ENCODE measurements at regions of chr4 and their contacts with region 1.

Region 1: DNA sequence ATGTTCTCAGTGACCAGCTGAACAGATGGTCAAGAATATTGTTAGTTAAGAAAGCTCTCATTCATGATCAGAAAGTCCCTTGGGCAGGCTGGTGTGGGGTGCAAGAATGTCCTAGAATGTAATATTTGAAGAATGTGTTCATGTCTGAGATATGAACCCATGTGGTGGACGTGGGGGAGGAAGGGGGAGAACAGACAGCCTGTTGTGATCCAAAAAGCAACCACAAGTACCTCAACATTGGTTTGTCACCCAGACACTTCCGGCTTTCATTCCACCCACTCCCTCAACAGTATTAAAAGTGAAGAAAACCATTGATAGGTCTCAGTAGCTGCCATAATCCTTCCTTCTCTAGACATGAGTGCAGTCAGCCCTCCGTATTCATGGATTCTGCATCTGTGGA is 82.2 kb downstream of the MAML3 start:
- DNase-seq: peak in 8 of 9 donors; percentile 62 to 84 (median 78)
- ATAC-seq: peak; percentile 91
- H3K4me3 ChIP-seq: peak overlapping the region; percentile 33
- H3K4me3 Mint-ChIP-seq: peak overlapping the region; percentile 69 to 91 (median 82)
- H3K27ac ChIP-seq: peak overlapping the region; percentile 54
- H3K27ac Mint-ChIP-seq: peak overlapping the region; percentile 84 to 98 (median 91)
- H3K4me1 ChIP-seq: peaks cover 18 to 30% of the 10 kb centered on the region in 2 donors
- H3K4me1 Mint-ChIP-seq: peaks cover 41 to 61% (median 56%) of the 10 kb centered on the region in 7 donors
- H3K27me3 ChIP-seq: no peaks in the 10 kb centered on the region
- H3K27me3 Mint-ChIP-seq: peaks cover 0 to 59% (median 0%) of the 10 kb centered on the region in 5 donors

Region 2: DNA sequence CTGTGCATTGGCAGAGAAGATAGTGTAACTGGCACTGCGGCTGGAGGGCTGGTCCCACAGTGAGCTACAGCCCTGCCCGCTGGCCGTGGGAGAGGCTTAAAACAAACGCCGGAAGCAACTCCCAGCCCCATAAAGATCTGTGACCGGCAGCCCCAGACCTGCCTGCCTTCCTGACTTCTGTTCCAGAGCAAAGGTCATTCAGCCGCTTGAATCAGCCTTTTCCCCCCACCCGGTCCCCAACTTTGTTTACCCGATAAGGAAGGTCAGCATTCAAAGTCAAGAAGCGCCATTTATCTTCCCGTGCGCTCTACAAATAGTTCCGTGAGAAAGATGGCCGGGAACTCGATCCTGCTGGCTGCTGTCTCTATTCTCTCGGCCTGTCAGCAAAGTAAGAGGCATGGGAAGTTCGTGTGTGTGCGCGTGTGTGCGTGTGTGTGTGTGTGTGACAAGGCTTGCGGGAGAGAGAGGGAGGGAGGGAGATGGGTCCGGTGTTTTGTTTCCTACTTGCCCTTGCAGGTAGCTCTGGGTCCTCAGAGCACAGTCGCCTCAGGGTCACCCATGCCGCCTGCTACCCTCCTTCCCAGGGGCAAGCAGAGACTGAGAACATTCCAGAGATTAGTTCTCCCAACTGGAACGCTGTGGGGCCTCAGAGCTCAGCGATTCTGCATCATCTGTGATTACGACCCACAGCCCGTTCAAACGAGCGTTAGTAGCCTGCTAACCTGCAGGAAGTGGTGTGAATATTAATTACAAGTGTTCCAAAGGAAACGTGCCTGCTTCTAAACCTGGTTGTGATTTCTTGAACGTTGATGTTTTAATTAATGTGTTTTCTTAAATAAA is 405.9 kb before region 1 on chr4 and contains the start of gene MGST2:
- CTCF ChIA-PET with region 1: no interaction called
- POLR2A ChIA-PET with region 1: no interaction called
- intact Hi-C with region 1: no loop called
- DNase-seq: peak in 5 of 9 donors; percentile 17 to 51 (median 27)
- ATAC-seq: peak; percentile 61
- H3K4me3 ChIP-seq: peak within 1 kb of the TSS; percentile 64
- H3K4me3 Mint-ChIP-seq: peak within 1 kb of the TSS; percentile 90 to 99 (median 94)
- H3K27ac ChIP-seq: peak within 1 kb of the TSS; percentile 42
- H3K27ac Mint-ChIP-seq: peak within 1 kb of the TSS; percentile 49 to 95 (median 88)
- H3K4me1 ChIP-seq: peaks cover 0 to 9% of the 10 kb centered on the region in 2 donors
- H3K4me1 Mint-ChIP-seq: peaks cover 15 to 44% (median 19%) of the 10 kb centered on the region in 7 donors
- H3K27me3 ChIP-seq: no peaks in the 10 kb centered on the region
- H3K27me3 Mint-ChIP-seq: no peaks in the 10 kb centered on the region
- total RNA-seq, gene MGST2: 1.4 to 37.3 (median 1.9) TPM

Region 3: DNA sequence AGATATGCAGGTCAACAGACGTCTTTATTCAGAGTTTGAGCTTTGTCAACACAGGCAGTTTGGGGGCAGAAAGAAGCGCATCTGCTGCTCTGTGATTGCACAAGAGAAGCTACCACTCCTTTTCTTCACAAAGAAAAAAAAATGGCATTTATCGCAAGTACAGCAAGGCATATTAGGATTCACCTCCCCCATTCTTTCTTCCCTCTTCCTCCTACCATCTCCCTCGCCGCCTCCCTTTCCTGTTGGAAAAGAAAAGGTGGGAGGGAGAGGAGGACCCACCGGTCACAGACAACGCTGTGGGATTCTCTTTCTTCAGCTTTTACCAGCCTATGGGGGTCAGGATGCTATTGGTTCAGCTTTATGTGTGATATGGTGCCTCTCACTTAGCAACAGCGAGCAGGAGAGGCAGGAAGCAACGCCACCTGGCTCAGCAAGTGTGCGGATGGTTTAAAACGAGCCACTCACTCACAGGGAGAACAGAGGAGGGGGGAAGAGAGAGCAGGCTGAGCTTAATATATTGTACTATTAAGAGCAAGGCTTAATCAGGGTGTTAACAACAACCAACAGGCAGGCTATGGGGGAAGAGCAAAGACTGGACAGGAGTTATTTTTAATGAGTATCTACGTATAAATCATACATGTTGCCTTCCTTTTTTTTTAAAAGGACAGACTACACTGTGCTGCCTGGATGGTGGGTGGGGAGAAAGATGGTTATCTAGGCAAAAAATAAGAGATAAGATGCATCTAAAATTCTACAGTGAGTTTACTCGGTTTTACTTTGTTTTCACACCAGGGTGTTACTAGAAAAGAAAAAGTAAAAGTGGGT is 22.6 kb before region 1 on chr4:
- CTCF ChIA-PET with region 1: interaction called, 5 read pairs
- POLR2A ChIA-PET with region 1: interaction called, 8 read pairs
- intact Hi-C with region 1: loop called (anchors 1 to 2 kb)
- DNase-seq: peak in 8 of 9 donors; percentile 13 to 73 (median 61)
- ATAC-seq: peak; percentile 92
- H3K4me3 ChIP-seq: peak overlapping the region; percentile 45
- H3K4me3 Mint-ChIP-seq: peak overlapping the region; percentile 76 to 93 (median 86)
- H3K27ac ChIP-seq: peak overlapping the region; percentile 46
- H3K27ac Mint-ChIP-seq: peak overlapping the region; percentile 77 to 94 (median 82)
- H3K4me1 ChIP-seq: peaks cover 3 to 14% of the 10 kb centered on the region in 2 donors
- H3K4me1 Mint-ChIP-seq: peaks cover 7 to 60% (median 41%) of the 10 kb centered on the region in 7 donors
- H3K27me3 ChIP-seq: no peaks in the 10 kb centered on the region
- H3K27me3 Mint-ChIP-seq: peaks cover 0 to 64% (median 0%) of the 10 kb centered on the region in 5 donors

Region 4: DNA sequence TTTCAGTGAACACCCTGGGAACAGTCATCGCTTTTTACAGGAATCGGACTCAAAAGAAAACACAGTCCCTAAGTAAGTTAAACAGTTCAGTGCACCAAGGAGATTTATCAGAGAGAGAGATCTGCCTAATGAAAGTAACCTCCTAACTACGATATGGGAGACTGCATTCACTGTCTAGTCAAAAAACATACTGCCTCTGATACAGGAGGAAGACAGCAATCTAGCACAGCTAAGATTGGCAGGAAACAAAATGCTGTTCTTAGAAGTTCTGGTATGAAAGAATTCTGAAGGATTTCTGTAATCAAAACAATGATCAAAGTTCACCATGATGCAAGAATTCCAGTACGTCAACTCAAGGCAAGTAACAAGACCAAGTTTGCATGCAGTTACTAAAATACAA is 10.6 kb before region 1 on chr4:
- CTCF ChIA-PET with region 1: interaction called, 3 read pairs
- POLR2A ChIA-PET with region 1: interaction called, 11 read pairs
- intact Hi-C with region 1: loop called in 1 of 2 experiments (anchors 1 kb)
- DNase-seq: peak in 6 of 9 donors; percentile 25 to 59 (median 46)
- ATAC-seq: peak; percentile 75
- H3K4me3 ChIP-seq: no peak overlapping the region
- H3K4me3 Mint-ChIP-seq: peak overlapping the region in 8 of 10 donors; percentile 66 to 91 (median 72)
- H3K27ac ChIP-seq: peak overlapping the region; percentile 23
- H3K27ac Mint-ChIP-seq: peak overlapping the region in 8 of 9 donors; percentile 74 to 97 (median 84)
- H3K4me1 ChIP-seq: peaks cover 0 to 4% of the 10 kb centered on the region in 2 donors
- H3K4me1 Mint-ChIP-seq: peaks cover 5 to 32% (median 29%) of the 10 kb centered on the region in 7 donors
- H3K27me3 ChIP-seq: no peaks in the 10 kb centered on the region
- H3K27me3 Mint-ChIP-seq: peaks cover 0 to 74% (median 0%) of the 10 kb centered on the region in 5 donors

Region 5: DNA sequence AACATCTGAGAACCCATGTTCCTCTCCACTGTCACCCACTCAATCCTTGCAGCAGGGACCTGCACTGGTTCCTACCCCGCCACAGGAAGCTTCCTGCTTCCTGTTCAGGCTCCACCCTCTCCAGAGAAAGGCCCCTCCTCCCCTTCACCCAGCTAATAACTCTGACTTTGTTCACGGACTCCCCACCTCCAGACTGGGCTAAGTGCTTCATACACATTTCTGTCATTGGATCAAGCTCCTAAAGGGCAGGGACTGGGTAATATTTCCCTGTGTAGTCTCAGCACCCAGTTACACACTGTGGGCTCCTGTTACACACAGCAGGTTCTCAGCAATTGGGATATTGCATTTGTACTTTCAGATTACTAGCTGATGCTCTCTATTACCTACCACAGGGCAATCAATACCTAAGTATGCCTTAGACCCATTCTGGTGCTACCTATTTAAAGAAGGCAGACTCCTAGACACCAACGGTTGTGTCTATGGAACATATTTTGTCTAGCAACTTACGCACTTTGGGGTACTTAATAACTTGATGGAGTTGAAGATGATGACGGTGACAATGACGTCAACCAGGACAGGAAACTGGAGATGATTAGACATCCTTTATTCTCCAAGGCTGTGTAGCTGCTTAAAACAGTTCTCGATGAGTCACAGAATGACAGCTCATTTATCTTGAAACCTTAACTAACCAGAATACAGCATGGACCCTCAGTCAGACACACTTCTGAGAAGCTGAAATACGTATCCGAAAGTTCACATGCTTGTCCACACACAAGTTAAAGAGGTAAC is 24.1 kb after region 1 on chr4:
- CTCF ChIA-PET with region 1: interaction called, 8 read pairs
- POLR2A ChIA-PET with region 1: interaction called, 15 read pairs
- intact Hi-C with region 1: loop called (anchors 1 kb)
- DNase-seq: peak in 8 of 9 donors; percentile 46 to 92 (median 71)
- ATAC-seq: peak; percentile 73
- H3K4me3 ChIP-seq: peak overlapping the region; percentile 39
- H3K4me3 Mint-ChIP-seq: peak overlapping the region; percentile 68 to 97 (median 88)
- H3K27ac ChIP-seq: peak overlapping the region; percentile 73
- H3K27ac Mint-ChIP-seq: peak overlapping the region; percentile 90 to 99 (median 95)
- H3K4me1 ChIP-seq: peaks cover 5 to 53% of the 10 kb centered on the region in 2 donors
- H3K4me1 Mint-ChIP-seq: peaks cover 51 to 83% (median 75%) of the 10 kb centered on the region in 7 donors
- H3K27me3 ChIP-seq: no peaks in the 10 kb centered on the region
- H3K27me3 Mint-ChIP-seq: peaks cover 0 to 2% (median 0%) of the 10 kb centered on the region in 5 donors

Region 6: GRCh38 chr4:140103676-140104075 is 31.9 kb after region 1 on chr4:
- CTCF ChIA-PET with region 1: interaction called, 4 read pairs
- POLR2A ChIA-PET with region 1: no interaction called
- intact Hi-C with region 1: loop called in 1 of 2 experiments (anchors 1 kb)
- DNase-seq: peak in 1 of 9 donors; percentile 41
- ATAC-seq: peak; percentile 83
- H3K4me3 ChIP-seq: no peak overlapping the region
- H3K4me3 Mint-ChIP-seq: peak overlapping the region in 1 of 10 donors; percentile 59
- H3K27ac ChIP-seq: no peak overlapping the region
- H3K27ac Mint-ChIP-seq: peak overlapping the region in 2 of 9 donors; percentile 61 to 72
- H3K4me1 ChIP-seq: peaks cover 0 to 12% of the 10 kb centered on the region in 2 donors
- H3K4me1 Mint-ChIP-seq: peaks cover 19 to 59% (median 31%) of the 10 kb centered on the region in 7 donors
- H3K27me3 ChIP-seq: no peaks in the 10 kb centered on the region
- H3K27me3 Mint-ChIP-seq: peaks cover 0 to 18% (median 0%) of the 10 kb centered on the region in 5 donors

Region 7: GRCh38 chr4:140116442-140117104 is 44.8 kb after region 1 on chr4:
- CTCF ChIA-PET with region 1: interaction called, 3 read pairs
- POLR2A ChIA-PET with region 1: interaction called, 5 read pairs
- intact Hi-C with region 1: loop called in 1 of 2 experiments (anchors 5 kb)
- DNase-seq: no peak
- ATAC-seq: peak; percentile 79
- H3K4me3 ChIP-seq: no peak overlapping the region
- H3K4me3 Mint-ChIP-seq: peak overlapping the region in 6 of 10 donors; percentile 3 to 37 (median 18)
- H3K27ac ChIP-seq: no peak overlapping the region
- H3K27ac Mint-ChIP-seq: peak overlapping the region in 6 of 9 donors; percentile 6 to 60 (median 24)
- H3K4me1 ChIP-seq: peaks cover 0 to 7% of the 10 kb centered on the region in 2 donors
- H3K4me1 Mint-ChIP-seq: peaks cover 15 to 23% (median 18%) of the 10 kb centered on the region in 7 donors
- H3K27me3 ChIP-seq: no peaks in the 10 kb centered on the region
- H3K27me3 Mint-ChIP-seq: peaks cover 0 to 14% (median 0%) of the 10 kb centered on the region in 5 donors

Measured in naive thymus-derived CD4-positive, alpha-beta T cell (primary cell).